Psoas muscle (tissue), 8 donors: ENCODE measurements at regions of chr11 and their contacts with region 1.

Region 1: GRCh38 chr11:119728651-119729580 is at the start of gene NECTIN1:
- DNase-seq: peak; percentile 89 to 91
- ATAC-seq: peak; percentile 92 to 96 (median 94)
- H3K4me3 ChIP-seq: peak within 1 kb of the TSS; percentile 86
- H3K27ac ChIP-seq: peak within 1 kb of the TSS; percentile 63
- H3K4me1 ChIP-seq: peaks cover 13% of the 10 kb centered on the region
- H3K27me3 ChIP-seq: peaks cover 0 to 29% (median 4%) of the 10 kb centered on the region in 3 donors
- CTCF ChIP-seq: peak; percentile 92
- total RNA-seq, gene NECTIN1: 1.6 to 2.2 (median 1.8) TPM

Region 2: DNA sequence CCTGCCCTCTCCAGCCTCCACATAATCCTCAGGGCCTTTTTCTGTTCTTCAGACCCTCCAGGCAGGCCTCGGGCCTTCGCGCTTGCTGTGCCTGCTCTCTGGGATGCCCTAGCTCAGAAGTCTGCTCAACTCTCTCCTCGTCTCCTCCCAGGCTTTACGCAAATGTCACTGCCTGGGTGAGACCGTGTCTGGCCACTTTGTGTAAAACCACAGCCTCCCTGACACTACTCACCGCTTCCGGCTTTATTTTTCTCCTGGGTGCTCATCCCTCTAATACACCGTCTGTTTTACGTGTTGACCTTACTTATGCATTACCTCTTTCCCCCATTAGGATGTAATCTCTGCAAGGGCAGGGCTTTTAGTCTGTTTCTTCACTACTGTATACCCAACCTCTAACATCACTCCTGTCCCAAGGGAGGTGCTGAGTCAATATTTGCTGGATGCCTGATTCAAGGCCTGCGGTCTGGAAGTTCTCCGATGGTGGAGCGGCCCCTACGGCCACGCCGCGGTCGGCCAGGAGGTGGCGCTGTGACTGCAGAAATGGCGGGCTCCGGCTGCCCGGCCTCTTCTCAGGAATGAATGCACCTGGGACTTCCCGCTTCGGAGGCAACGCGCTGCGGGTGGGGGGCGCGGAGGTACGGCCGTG is 247.8 kb before region 1 on chr11:
- intact Hi-C with region 1: loop called (anchors 2 to 10 kb)
- DNase-seq: peak; percentile 86 to 88
- ATAC-seq: peak; percentile 78 to 92 (median 88)
- H3K4me3 ChIP-seq: no peak overlapping the region
- H3K27ac ChIP-seq: no peak overlapping the region
- H3K4me1 ChIP-seq: no peaks in the 10 kb centered on the region
- H3K27me3 ChIP-seq: peaks cover 0 to 16% (median 2%) of the 10 kb centered on the region in 3 donors
- CTCF ChIP-seq: peak; percentile 96

Region 3: DNA sequence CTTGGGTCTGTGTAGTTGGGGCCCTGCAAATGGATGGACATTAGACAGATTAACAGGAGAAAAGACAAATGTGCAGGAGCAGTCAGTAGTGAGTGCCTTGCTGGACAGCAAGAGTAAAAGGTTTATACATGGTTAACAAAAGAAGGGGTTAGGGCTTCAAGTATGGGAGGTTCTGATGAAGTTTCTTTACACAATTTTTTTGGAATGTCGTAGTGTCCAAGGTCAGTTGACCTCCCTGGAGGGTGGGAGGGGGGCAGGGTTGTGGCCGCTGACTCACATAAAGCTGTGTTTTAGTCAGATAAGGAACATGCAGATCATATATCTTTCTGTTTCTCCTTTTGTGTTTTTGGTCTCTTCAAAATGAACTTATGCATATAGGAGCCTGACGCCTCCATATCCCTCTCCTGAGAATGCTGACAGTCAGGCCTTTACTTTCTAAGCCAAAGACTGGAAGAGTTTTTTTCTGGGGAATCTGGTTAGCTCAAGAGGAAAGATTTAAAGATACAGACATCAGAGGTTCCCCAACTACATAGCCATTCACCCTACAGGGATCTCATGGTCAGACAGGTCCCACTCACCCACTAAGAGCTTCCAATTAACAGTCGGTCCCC is 134.2 kb before region 1 on chr11:
- intact Hi-C with region 1: no loop called
- DNase-seq: peak in 1 of 2 donors; percentile 28
- ATAC-seq: no peak
- H3K4me3 ChIP-seq: no peak overlapping the region
- H3K27ac ChIP-seq: no peak overlapping the region
- H3K4me1 ChIP-seq: no peaks in the 10 kb centered on the region
- H3K27me3 ChIP-seq: no peaks in the 10 kb centered on the region
- CTCF ChIP-seq: no peak

Region 4: DNA sequence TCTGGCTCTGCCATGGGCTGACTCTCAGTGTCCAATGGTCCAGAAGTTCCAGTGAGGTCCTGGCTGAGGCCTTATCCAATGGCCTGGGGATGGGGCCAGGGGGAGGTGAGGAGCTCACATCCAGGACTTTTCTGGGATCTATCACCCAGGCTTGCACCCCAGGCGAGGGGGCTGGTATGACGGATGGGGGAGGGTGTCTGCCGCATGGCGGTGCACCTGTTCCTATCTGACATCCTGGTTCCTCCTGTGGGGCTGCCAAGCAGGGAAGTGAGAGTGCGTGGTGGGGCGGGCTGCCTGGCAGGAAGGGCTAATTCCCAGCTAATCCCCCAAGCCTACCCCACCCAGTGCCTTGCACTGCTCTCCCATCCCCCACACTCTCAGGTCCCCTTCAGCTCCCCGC is 102.0 kb before region 1 on chr11:
- intact Hi-C with region 1: no loop called
- DNase-seq: peak in 1 of 2 donors; percentile 45
- ATAC-seq: peak; percentile 29 to 81 (median 66)
- H3K4me3 ChIP-seq: no peak overlapping the region
- H3K27ac ChIP-seq: no peak overlapping the region
- H3K4me1 ChIP-seq: peaks cover 6% of the 10 kb centered on the region
- H3K27me3 ChIP-seq: peaks cover 0 to 4% (median 0%) of the 10 kb centered on the region in 3 donors
- CTCF ChIP-seq: no peak

Region 5: GRCh38 chr11:119666463-119667131 is 62.3 kb before region 1 on chr11:
- intact Hi-C with region 1: loop called (anchors 1 to 2 kb)
- DNase-seq: peak; percentile 76 to 88
- ATAC-seq: peak; percentile 95 to 98 (median 96)
- H3K4me3 ChIP-seq: no peak overlapping the region
- H3K27ac ChIP-seq: no peak overlapping the region
- H3K4me1 ChIP-seq: peaks cover 5% of the 10 kb centered on the region
- H3K27me3 ChIP-seq: no peaks in the 10 kb centered on the region
- CTCF ChIP-seq: peak; percentile 96